ENCODE measurements at regions of chr16 and their contacts with region 1.

Region 1: DNA sequence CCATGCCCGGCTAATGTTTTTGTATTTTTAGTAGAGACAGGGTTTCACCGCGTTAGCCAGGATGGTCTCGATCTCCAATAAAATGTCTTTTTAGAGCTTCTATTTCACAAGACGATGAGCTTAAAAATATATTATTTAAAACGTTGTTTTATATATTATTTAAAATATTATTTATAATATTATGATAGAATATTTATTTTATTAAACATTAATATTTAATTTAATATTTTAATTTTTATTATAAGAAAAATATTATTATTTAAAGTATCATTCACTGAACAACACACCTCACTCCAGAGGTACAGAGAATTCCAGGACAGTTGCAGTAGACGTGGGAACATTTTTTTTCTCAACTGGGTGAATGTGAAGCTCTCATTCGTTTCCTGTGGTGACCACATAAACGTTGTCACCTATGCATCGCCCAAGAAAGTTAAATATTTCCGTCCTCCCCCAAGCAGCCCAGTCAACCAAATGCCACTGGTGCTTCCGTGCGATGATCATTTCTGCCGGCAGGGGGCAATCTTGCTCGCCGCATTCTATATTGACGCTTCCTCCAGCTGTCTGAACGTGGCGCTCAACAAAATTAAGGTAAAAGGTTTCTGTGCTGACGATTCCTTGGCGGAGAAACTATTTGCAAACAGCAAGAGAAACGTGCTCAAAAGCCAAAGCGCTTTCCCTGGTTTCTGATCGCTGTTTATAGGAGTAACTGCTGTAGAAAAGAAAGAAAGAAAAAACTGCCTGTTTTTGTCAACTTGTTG is 41.7 kb upstream of the PRSS54 start:
- DNase-seq: peak; percentile 91

Region 2: GRCh38 chr16:58409316-58409973 is 72.9 kb after region 1 on chr16:
- intact Hi-C with region 1: no loop called
- DNase-seq: no peak

Region 3: GRCh38 chr16:58487566-58488351 is 151.2 kb after region 1 on chr16:
- intact Hi-C with region 1: loop called (anchors 2 kb)
- DNase-seq: peak; percentile 93